Dorsolateral prefrontal cortex (tissue), 120 donors: ENCODE measurements at regions of chr13 and their contacts with region 1.

Region 1: GRCh38 chr13:45310341-45311125 is 30.4 kb downstream of the TPT1 start:
- DNase-seq: no peak
- H3K4me3 ChIP-seq: peak overlapping the region; percentile 32 to 85 (median 65)
- H3K27ac ChIP-seq: peak overlapping the region in 43 of 59 donors; percentile 2 to 86 (median 57)
- H3K27me3 ChIP-seq: no peaks in the 10 kb centered on the region
- CTCF ChIP-seq: no peak

Region 2: GRCh38 chr13:45047394-45048310 is 262.9 kb before region 1 on chr13:
- intact Hi-C with region 1: loop called (anchors 1 to 2 kb)
- DNase-seq: peak; percentile 59 to 87 (median 84)
- H3K4me3 ChIP-seq: peak overlapping the region; percentile 37 to 77 (median 59)
- H3K27ac ChIP-seq: peak overlapping the region in 58 of 59 donors; percentile 32 to 97 (median 84)
- H3K27me3 ChIP-seq: no peaks in the 10 kb centered on the region
- CTCF ChIP-seq: peak; percentile 80 to 97 (median 89)